Ovary (tissue), 10 donors: ENCODE measurements at regions of chr14 and their contacts with region 1.

Region 1: DNA sequence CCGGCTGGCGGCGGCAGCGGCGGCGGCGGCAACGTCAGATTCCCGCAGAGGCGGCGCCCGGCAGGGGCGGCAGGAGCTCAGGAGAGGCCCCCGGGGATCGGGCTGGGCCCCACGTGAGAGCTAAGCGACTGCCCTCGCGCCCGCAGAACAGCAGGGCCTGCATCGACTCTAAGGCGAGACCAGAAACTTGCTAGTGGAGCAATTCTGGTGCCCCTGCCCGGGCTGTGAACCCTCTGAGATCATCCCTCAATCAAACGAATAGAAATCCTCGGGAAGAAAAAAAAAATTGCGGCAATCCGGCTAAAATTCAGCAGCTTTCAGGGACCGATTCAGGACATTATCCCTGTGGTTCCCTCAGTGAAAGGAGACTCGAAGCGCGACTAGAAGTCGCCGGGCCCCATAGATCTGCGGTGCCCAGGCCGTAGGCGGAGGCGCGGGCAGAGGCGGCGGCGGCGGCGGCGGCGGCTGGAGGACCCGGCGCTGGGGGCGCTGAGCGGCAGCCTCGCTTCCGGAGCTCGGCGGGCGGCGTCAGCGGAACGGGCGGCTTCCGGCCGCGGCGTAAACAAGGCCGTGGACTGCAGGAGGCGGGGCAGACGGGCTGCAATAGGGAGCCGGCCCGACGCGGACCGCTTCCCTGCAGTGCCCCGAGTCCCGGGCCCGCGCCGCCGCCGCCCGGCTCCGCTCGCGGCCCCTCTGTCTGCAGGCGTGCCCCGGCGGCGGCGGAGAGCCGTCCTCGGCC is at the start of gene KLHDC2:
- DNase-seq: peak; percentile 86 to 93 (median 89)
- H3K4me3 ChIP-seq: peak within 1 kb of the TSS; percentile 99
- H3K27ac ChIP-seq: peak within 1 kb of the TSS; percentile 84 to 97
- H3K4me1 ChIP-seq: peaks cover 13% of the 10 kb centered on the region
- H3K27me3 ChIP-seq: no peaks in the 10 kb centered on the region
- CTCF ChIP-seq: peak in 1 of 3 donors; percentile 33
- EP300 ChIP-seq: no peak
- POLR2A ChIP-seq: peak; percentile 74
- total RNA-seq, gene KLHDC2: 49.4 to 84.1 (median 70.1) TPM

Region 2: GRCh38 chr14:49692811-49693734 is 74.7 kb before region 1 on chr14 and contains the start of gene KLHDC1:
- intact Hi-C with region 1: loop called in 1 of 4 experiments (anchors 10 kb)
- DNase-seq: peak; percentile 88 to 94 (median 91)
- H3K4me3 ChIP-seq: peak within 1 kb of the TSS; percentile 76
- H3K27ac ChIP-seq: peak within 1 kb of the TSS; percentile 78 to 97
- H3K4me1 ChIP-seq: peaks cover 5% of the 10 kb centered on the region
- H3K27me3 ChIP-seq: no peaks in the 10 kb centered on the region
- CTCF ChIP-seq: peak in 1 of 3 donors; percentile 13
- EP300 ChIP-seq: no peak
- POLR2A ChIP-seq: peak; percentile 95
- total RNA-seq, gene KLHDC1: 8.6 to 22.9 (median 19.3) TPM

Region 3: GRCh38 chr14:50038398-50039119 is 270.8 kb after region 1 on chr14:
- intact Hi-C with region 1: no loop called
- DNase-seq: no peak
- H3K4me3 ChIP-seq: no peak overlapping the region
- H3K27ac ChIP-seq: no peak overlapping the region
- H3K4me1 ChIP-seq: no peaks in the 10 kb centered on the region
- H3K27me3 ChIP-seq: no peaks in the 10 kb centered on the region
- CTCF ChIP-seq: no peak
- EP300 ChIP-seq: no peak
- POLR2A ChIP-seq: no peak